ENCODE measurements at regions of chr3 and their contacts with region 1.

Region 1: GRCh38 chr3:172039436-172040077 is at the start of gene FNDC3B:
- DNase-seq: peak; percentile 96
- H3K4me3 ChIP-seq: peak within 1 kb of the TSS; percentile 95
- H3K27ac ChIP-seq: peak within 1 kb of the TSS; percentile 99
- H3K4me1 ChIP-seq: peaks cover 59% of the 10 kb centered on the region
- H3K27me3 ChIP-seq: no peaks in the 10 kb centered on the region
- CTCF ChIP-seq: no peak
- total RNA-seq, gene FNDC3B: 75.7 TPM

Region 2: GRCh38 chr3:171829841-171830517 is 209.6 kb before region 1 on chr3:
- intact Hi-C with region 1: loop called (anchors 10 kb)
- DNase-seq: peak; percentile 91
- H3K4me3 ChIP-seq: no peak overlapping the region
- H3K27ac ChIP-seq: peak overlapping the region; percentile 85
- H3K4me1 ChIP-seq: peaks cover 52% of the 10 kb centered on the region
- H3K27me3 ChIP-seq: no peaks in the 10 kb centered on the region
- CTCF ChIP-seq: peak; percentile 81

Region 3: DNA sequence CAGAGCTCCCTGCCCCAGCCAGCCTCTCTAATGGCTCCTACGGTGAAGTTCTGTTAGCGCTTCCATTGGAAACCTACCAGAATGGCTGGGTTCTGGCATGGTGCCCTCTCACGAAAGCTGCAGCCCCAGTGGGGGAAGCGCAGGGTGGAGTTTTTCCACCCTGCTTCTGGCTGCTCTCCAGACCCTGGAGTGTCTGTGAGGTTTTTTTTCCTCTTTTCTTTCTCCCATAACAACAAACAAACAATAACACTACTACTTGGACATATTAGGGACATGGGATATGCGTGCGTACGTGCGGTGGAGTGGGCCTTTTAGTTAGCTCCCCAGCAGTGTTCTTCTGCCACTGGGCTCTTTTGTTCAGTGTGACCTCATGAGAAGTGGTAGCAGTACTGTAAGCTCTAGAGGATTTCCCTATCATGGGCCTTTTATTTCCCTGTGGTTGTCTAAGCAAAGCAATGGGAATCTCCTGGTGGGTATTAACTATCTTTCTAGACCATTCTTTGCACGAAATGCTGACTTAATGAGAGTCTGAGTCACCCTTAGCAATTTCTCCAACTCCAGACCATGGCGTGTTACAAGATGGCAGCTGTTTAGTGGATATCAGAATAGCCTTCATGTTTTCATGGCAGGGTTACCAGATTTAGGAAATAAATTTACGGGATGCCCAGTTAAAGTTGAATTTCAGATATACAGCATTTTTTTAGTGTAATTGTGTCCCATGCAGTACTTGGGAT is 161.7 kb after region 1 on chr3:
- intact Hi-C with region 1: no loop called
- DNase-seq: peak; percentile 89
- H3K4me3 ChIP-seq: peak overlapping the region; percentile 25
- H3K27ac ChIP-seq: peak overlapping the region; percentile 89
- H3K4me1 ChIP-seq: peaks cover 70% of the 10 kb centered on the region
- H3K27me3 ChIP-seq: no peaks in the 10 kb centered on the region
- CTCF ChIP-seq: no peak

Region 4: GRCh38 chr3:172332256-172333041 is 292.9 kb after region 1 on chr3:
- intact Hi-C with region 1: loop called (anchors 10 kb)
- DNase-seq: peak; percentile 37
- H3K4me3 ChIP-seq: no peak overlapping the region
- H3K27ac ChIP-seq: peak overlapping the region; percentile 48
- H3K4me1 ChIP-seq: peaks cover 9% of the 10 kb centered on the region
- H3K27me3 ChIP-seq: no peaks in the 10 kb centered on the region
- CTCF ChIP-seq: peak; percentile 94